Activated CD4-positive, alpha-beta memory T cell treated with anti-CD3 and anti-CD28 coated beads for 36 hours (primary cell): ENCODE measurements at regions of chr4 and their contacts with region 1.

Region 1: GRCh38 chr4:71026086-71026485 is 32.6 kb downstream of the DCK start:
- DNase-seq: no peak
- H3K4me3 Mint-ChIP-seq: no peak overlapping the region
- H3K27ac Mint-ChIP-seq: no peak overlapping the region
- H3K4me1 Mint-ChIP-seq: no peaks in the 10 kb centered on the region
- H3K27me3 Mint-ChIP-seq: no peaks in the 10 kb centered on the region

Region 2: DNA sequence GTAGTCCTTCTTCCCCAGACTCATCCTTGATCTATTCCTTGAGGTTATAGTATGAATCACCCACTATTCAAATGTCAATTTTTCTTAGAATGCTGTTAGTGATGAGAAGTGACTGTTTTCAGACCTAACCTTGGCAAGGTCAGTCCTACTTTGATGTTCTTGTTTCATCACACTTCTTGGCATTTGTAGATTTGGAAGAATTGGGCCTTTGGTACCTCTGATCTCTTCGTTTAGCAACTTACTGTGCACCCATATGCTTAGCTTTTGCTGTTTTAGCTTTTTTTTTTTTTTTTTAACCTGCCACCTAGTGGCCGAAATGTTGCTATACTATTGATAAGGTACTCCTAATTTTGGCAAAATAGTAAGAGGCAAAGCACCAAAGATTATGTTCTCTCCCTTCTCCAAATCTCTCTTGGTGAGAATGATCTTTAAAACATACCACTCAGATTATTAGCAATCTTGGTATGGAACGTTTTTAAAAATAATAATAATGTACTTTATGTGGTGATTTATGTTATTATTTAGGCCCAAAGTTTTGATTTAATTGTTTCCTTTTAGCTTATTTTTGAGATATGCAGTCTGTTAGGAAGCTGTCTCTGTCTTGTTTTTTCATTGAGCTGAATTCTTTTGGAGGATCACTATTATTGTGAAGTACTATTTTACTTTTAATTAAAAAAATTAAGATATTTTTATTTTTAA is 16.0 kb before region 1 on chr4:
- CTCF ChIA-PET with region 1: interaction called, 10 read pairs
- POLR2A ChIA-PET with region 1: no interaction called
- intact Hi-C with region 1: no loop called
- DNase-seq: no peak
- H3K4me3 Mint-ChIP-seq: no peak overlapping the region
- H3K27ac Mint-ChIP-seq: peak overlapping the region; percentile 82
- H3K4me1 Mint-ChIP-seq: peaks cover 31% of the 10 kb centered on the region
- H3K27me3 Mint-ChIP-seq: no peaks in the 10 kb centered on the region